ENCODE measurements at regions of chr2 and their contacts with region 1.

Region 1: GRCh38 chr2:27370026-27370815 is at the starts of genes EIF2B4 and SNX17:
- DNase-seq: peak; percentile 98
- ATAC-seq: peak; percentile 93
- H3K4me3 Mint-ChIP-seq: peak within 1 kb of the TSS; percentile 100
- H3K27ac Mint-ChIP-seq: peak within 1 kb of the TSS; percentile 98
- H3K4me1 Mint-ChIP-seq: peaks cover 35% of the 10 kb centered on the region
- H3K27me3 Mint-ChIP-seq: no peaks in the 10 kb centered on the region
- total RNA-seq, gene EIF2B4: 38.3 to 39.2 TPM
- total RNA-seq, gene SNX17: 113 to 116 TPM

Region 2: DNA sequence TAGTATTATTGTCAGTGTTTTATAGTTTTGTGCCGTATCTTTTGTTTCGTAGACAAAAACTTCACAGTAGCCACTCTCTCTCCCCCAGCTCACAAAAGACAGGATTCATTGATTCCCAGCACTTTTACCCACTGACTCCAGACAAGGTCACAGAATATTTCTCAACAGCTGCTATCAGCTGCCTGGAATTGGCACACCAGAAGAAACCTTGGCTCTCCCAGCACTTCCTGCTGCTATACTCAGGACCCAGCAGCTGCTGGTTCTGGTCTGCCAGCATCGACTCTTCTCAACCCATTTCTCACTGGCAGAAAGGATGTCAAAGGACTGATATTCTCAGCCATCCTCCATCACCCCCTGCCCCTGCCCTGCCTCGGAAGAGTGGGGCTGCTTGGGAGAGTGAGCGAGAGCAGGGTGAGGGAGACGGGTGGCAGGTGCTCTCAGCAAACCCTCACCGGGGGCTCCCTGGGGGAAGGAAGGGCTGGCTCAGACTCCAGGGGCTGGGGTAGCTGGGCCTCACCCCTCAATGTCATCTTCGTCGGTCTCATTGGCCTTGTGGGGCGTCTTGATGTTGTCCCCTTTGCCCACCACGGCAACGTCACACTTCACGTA is 886.2 kb before region 1 on chr2:
- POLR2A ChIA-PET with region 1: no interaction called
- DNase-seq: no peak
- ATAC-seq: no peak
- H3K4me3 Mint-ChIP-seq: no peak overlapping the region
- H3K27ac Mint-ChIP-seq: no peak overlapping the region
- H3K4me1 Mint-ChIP-seq: peaks cover 20% of the 10 kb centered on the region
- H3K27me3 Mint-ChIP-seq: peaks cover 2% of the 10 kb centered on the region

Region 3: DNA sequence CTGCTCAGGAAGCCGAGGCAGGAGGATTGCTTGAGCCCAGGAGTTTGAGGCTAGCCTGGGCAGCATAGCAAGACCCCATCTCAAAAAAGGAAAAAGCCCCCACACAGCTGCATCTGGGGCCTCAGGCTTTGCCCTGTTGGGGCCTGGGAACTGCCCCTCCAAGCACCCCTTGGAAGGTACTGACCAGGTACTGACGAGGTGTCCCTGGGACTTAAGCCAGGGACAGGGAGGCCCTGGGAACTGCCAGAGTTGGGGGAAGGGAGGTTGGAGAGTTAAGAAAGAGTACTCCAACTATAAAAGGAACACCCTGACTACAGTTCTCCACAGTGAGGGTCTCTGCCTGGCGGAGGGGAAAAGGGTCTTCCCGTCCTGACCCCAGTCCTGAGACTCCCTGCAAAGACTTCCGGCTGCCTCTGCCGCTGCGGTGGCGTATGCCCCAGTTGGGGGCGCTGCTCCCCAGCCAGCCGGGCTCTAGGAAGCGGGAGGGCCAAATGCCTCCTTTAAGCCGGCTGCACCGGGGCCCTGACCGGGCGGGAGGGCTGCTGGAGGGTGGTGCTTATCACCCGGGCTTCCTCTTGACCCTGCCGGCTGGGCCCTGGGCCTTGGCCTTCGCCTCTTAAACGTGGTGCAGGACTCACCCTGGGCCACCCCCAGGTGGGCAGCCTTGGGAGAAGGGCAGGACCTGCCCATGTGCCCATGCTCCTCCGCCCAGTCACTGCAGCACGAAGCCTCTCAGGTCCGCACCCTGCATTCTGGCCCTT is 120.2 kb before region 1 on chr2:
- POLR2A ChIA-PET with region 1: no interaction called
- DNase-seq: peak; percentile 80
- ATAC-seq: peak; percentile 78
- H3K4me3 Mint-ChIP-seq: no peak overlapping the region
- H3K27ac Mint-ChIP-seq: no peak overlapping the region
- H3K4me1 Mint-ChIP-seq: peaks cover 4% of the 10 kb centered on the region
- H3K27me3 Mint-ChIP-seq: peaks cover 11% of the 10 kb centered on the region

Region 4: GRCh38 chr2:27322766-27323595 is 47.2 kb before region 1 on chr2 and contains the start of gene MPV17:
- POLR2A ChIA-PET with region 1: interaction called, 15 read pairs
- DNase-seq: peak; percentile 85
- ATAC-seq: peak; percentile 90
- H3K4me3 Mint-ChIP-seq: peak within 1 kb of the TSS; percentile 97
- H3K27ac Mint-ChIP-seq: peak within 1 kb of the TSS; percentile 95
- H3K4me1 Mint-ChIP-seq: peaks cover 13% of the 10 kb centered on the region
- H3K27me3 Mint-ChIP-seq: no peaks in the 10 kb centered on the region
- total RNA-seq, gene MPV17: 93.4 to 100 TPM

Region 5: GRCh38 chr2:27356382-27357181 is 13.6 kb before region 1 on chr2 and contains the start of gene GTF3C2:
- POLR2A ChIA-PET with region 1: interaction called, 48 read pairs
- DNase-seq: peak; percentile 88
- ATAC-seq: peak; percentile 80
- H3K4me3 Mint-ChIP-seq: peak within 1 kb of the TSS; percentile 97
- H3K27ac Mint-ChIP-seq: peak within 1 kb of the TSS; percentile 99
- H3K4me1 Mint-ChIP-seq: peaks cover 34% of the 10 kb centered on the region
- H3K27me3 Mint-ChIP-seq: no peaks in the 10 kb centered on the region
- total RNA-seq, gene GTF3C2: 66.4 to 70.8 TPM

Region 6: DNA sequence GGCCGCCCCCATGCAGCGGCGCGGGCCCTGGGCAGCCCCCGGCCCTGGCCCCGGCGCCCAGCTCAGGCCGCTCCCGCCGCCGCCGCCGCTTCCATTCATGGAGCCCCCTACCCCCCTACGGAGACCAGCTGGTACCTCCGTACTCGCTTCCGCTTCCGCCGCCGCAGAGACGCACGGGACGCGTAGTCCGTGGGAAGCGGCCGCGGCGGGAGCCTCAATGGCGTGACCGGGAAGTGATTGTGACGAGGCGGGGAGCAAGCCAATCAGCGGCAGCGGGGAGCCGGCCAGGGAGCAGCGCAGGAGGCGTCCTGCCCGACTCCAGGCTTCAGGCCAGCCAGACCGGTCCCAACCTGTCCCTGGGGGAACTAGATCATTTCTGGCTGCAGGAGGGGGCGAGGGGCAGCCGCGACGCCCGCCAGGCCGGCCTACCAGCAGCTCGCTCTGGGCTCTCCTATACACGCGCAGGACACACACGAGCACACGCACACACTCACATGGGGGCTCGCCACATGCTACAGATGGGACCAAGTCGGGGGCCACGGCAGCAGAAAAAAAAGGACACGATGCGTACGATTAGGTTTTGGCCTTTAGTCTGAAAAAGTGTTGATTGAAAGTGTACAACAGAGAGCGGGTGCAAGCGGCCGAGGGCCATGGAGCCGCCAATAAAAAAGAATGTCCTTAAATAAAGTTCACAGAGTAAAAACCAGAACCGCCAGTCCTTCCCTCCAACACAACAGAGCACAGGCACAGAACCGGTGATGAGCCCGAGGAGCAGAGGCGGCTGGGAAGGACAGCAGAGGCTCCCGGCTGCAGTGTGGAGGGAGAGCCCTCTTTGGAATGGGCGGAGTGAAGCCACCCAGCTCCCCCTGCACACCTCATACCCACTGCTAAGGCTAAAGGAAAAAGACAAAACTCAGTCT is 10.7 kb after region 1 on chr2 and contains the start of gene ZNF513:
- POLR2A ChIA-PET with region 1: interaction called, 55 read pairs
- DNase-seq: peak; percentile 90
- ATAC-seq: peak; percentile 89
- H3K4me3 Mint-ChIP-seq: peak within 1 kb of the TSS; percentile 79
- H3K27ac Mint-ChIP-seq: peak within 1 kb of the TSS; percentile 87
- H3K4me1 Mint-ChIP-seq: peaks cover 16% of the 10 kb centered on the region
- H3K27me3 Mint-ChIP-seq: no peaks in the 10 kb centered on the region
- total RNA-seq, gene ZNF513: 16.4 to 18.6 TPM

Region 7: GRCh38 chr2:27428213-27428977 is 58.2 kb after region 1 on chr2 and contains the start of gene NRBP1:
- POLR2A ChIA-PET with region 1: interaction called, 25 read pairs
- DNase-seq: peak; percentile 98
- ATAC-seq: peak; percentile 88
- H3K4me3 Mint-ChIP-seq: peak within 1 kb of the TSS; percentile 99
- H3K27ac Mint-ChIP-seq: peak within 1 kb of the TSS; percentile 99
- H3K4me1 Mint-ChIP-seq: peaks cover 19% of the 10 kb centered on the region
- H3K27me3 Mint-ChIP-seq: peaks cover 2% of the 10 kb centered on the region
- total RNA-seq, gene NRBP1: 92.2 to 92.5 TPM